HEK293T (cell line): ENCODE measurements at regions of chr22 and their contacts with region 1.

Region 1: GRCh38 chr22:46116491-46116958 is 33.8 kb upstream of the PPARA start:
- DNase-seq: peak; percentile 92

Region 2: GRCh38 chr22:45994491-45995404 is 121.8 kb before region 1 on chr22:
- CTCF ChIA-PET with region 1: interaction called, 22 read pairs
- POLR2A ChIA-PET with region 1: interaction called, 4 read pairs
- DNase-seq: peak; percentile 86

Region 3: GRCh38 chr22:46131151-46131587 is 14.6 kb after region 1 on chr22:
- CTCF ChIA-PET with region 1: no interaction called
- POLR2A ChIA-PET with region 1: no interaction called
- DNase-seq: peak; percentile 67